ENCODE measurements at regions of chr3 and their contacts with region 1.

Region 1: DNA sequence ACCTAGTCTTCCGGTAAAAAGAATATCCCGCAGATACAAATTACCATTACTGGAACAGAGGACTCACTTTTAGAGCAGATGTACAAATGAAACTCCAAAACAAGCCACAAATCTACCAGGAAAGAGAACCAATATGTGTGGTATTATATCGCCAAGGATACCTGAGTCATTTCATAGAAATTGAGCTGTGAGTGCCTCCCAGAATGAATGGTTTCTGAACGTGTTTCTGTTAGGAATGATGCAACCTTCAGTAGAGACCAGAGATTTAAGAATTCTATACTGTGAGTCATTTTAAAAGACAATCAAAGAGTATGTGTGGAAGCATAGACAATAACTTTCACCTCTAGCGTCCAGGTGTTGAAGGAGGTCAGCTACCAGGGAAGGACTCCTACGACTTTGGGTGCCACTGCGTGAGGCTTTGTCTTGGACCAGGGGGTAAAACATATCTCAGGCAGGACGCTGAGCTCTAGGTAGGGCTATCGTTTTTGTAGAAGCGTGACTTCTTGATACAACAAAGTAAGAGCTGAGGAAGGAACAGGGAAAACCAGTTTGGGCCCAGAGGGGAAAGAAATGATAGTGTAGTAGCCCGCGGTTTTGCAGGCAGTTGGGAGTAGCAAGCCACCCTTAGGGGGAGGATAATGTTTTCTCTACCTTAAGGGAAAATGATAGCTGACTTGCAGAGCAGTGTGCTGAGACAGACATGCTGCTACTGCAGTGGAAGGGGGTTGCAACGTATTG is 210.5 kb downstream of the TP63 start:
- DNase-seq: peak; percentile 83 to 97
- H3K4me3 ChIP-seq: peak overlapping the region; percentile 40; the same call in 1 of the 2 replicates
- H3K27ac ChIP-seq: peak overlapping the region; percentile 97
- H3K4me1 ChIP-seq: peaks cover 26% of the 10 kb centered on the region
- H3K27me3 ChIP-seq: no peaks in the 10 kb centered on the region
- CTCF ChIP-seq: no peak

Region 2: GRCh38 chr3:189270248-189270832 is 571.3 kb before region 1 on chr3:
- CTCF ChIA-PET with region 1: interaction called, 4 read pairs
- POLR2A ChIA-PET with region 1: no interaction called
- intact Hi-C with region 1: loop called (anchors 1 kb)
- DNase-seq: peak; percentile 83 to 86
- H3K4me3 ChIP-seq: no peak overlapping the region
- H3K27ac ChIP-seq: no peak overlapping the region
- H3K4me1 ChIP-seq: no peaks in the 10 kb centered on the region
- H3K27me3 ChIP-seq: no peaks in the 10 kb centered on the region
- CTCF ChIP-seq: peak; percentile 78

Region 3: DNA sequence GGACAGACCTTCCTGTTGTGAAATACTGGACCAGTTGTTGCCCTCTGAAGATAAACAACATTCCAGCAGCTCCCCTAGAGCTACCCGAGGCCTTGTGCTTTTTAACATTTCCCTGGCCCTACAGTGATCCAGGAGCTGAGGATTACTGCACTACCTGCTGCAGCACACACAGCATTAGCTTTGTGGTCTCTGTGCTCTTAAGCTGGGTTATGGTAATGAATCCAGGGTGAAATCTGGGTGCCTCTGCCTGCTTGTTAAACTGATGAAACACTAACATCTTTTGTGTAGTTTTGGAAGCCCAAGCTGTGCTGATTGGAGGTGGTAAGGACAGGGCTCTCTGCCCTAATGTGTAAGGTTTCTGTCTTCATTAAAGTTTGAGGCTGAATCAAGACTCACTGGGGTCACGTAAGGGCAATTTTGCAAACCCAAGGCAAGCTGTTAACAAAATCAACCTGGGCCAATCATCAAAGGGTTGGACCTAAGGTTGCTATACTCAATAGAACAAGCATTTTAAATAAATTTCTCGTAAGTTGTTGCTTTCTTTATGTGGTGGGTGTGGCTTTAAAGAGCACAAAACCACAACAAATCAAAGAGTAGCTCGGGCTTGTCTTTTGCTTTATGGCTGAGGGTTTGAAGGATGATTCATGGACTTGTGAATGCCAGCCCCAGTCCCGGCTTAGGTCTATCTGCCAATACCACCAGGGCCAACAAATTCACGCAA is 486.0 kb before region 1 on chr3:
- CTCF ChIA-PET with region 1: no interaction called
- POLR2A ChIA-PET with region 1: no interaction called
- intact Hi-C with region 1: loop called (anchors 1 kb)
- DNase-seq: peak in 1 of 2 experiments; percentile 44
- H3K4me3 ChIP-seq: no peak overlapping the region
- H3K27ac ChIP-seq: peak overlapping the region; percentile 57
- H3K4me1 ChIP-seq: peaks cover 33% of the 10 kb centered on the region
- H3K27me3 ChIP-seq: no peaks in the 10 kb centered on the region
- CTCF ChIP-seq: no peak

Region 4: GRCh38 chr3:189512039-189512438 is 329.6 kb before region 1 on chr3:
- CTCF ChIA-PET with region 1: no interaction called
- POLR2A ChIA-PET with region 1: no interaction called
- intact Hi-C with region 1: loop called (anchors 2 kb)
- DNase-seq: no peak
- H3K4me3 ChIP-seq: no peak overlapping the region
- H3K27ac ChIP-seq: peak overlapping the region; percentile 61; the same call in 1 of the 2 replicates
- H3K4me1 ChIP-seq: peaks cover 27% of the 10 kb centered on the region
- H3K27me3 ChIP-seq: no peaks in the 10 kb centered on the region
- CTCF ChIP-seq: no peak

Region 5: GRCh38 chr3:189664311-189664710 is 177.3 kb before region 1 on chr3:
- CTCF ChIA-PET with region 1: no interaction called
- POLR2A ChIA-PET with region 1: no interaction called
- intact Hi-C with region 1: loop called (anchors 1 kb)
- DNase-seq: peak; percentile 51 to 83
- H3K4me3 ChIP-seq: no peak overlapping the region
- H3K27ac ChIP-seq: peak overlapping the region; percentile 51
- H3K4me1 ChIP-seq: peaks cover 15% of the 10 kb centered on the region
- H3K27me3 ChIP-seq: no peaks in the 10 kb centered on the region
- CTCF ChIP-seq: no peak

Region 6: GRCh38 chr3:189766437-189766836 is 75.2 kb before region 1 on chr3:
- CTCF ChIA-PET with region 1: interaction called, 10 read pairs
- POLR2A ChIA-PET with region 1: interaction called, 3 read pairs
- intact Hi-C with region 1: loop called (anchors 1 kb)
- DNase-seq: peak; percentile 63 to 93
- H3K4me3 ChIP-seq: peak overlapping the region; percentile 38
- H3K27ac ChIP-seq: peak overlapping the region; percentile 90
- H3K4me1 ChIP-seq: peaks cover 35% of the 10 kb centered on the region
- H3K27me3 ChIP-seq: no peaks in the 10 kb centered on the region
- CTCF ChIP-seq: no peak

Region 7: GRCh38 chr3:189947948-189948723 is 106.5 kb after region 1 on chr3:
- CTCF ChIA-PET with region 1: interaction called, 19 read pairs
- POLR2A ChIA-PET with region 1: interaction called, 4 read pairs
- intact Hi-C with region 1: loop called (anchors 1 kb)
- DNase-seq: peak; percentile 40 to 56
- H3K4me3 ChIP-seq: no peak overlapping the region
- H3K27ac ChIP-seq: peak overlapping the region; percentile 39
- H3K4me1 ChIP-seq: peaks cover 42% of the 10 kb centered on the region
- H3K27me3 ChIP-seq: no peaks in the 10 kb centered on the region
- CTCF ChIP-seq: peak; percentile 94

Region 8: GRCh38 chr3:190252080-190252479 is 410.4 kb after region 1 on chr3:
- CTCF ChIA-PET with region 1: no interaction called
- POLR2A ChIA-PET with region 1: no interaction called
- intact Hi-C with region 1: no loop called
- DNase-seq: peak in 1 of 2 experiments; percentile 51
- H3K4me3 ChIP-seq: no peak overlapping the region
- H3K27ac ChIP-seq: no peak overlapping the region
- H3K4me1 ChIP-seq: no peaks in the 10 kb centered on the region
- H3K27me3 ChIP-seq: no peaks in the 10 kb centered on the region
- CTCF ChIP-seq: no peak

Measured in PC-9 (cell line).